ENCODE measurements at regions of chr3 and their contacts with region 1.

Region 1: DNA sequence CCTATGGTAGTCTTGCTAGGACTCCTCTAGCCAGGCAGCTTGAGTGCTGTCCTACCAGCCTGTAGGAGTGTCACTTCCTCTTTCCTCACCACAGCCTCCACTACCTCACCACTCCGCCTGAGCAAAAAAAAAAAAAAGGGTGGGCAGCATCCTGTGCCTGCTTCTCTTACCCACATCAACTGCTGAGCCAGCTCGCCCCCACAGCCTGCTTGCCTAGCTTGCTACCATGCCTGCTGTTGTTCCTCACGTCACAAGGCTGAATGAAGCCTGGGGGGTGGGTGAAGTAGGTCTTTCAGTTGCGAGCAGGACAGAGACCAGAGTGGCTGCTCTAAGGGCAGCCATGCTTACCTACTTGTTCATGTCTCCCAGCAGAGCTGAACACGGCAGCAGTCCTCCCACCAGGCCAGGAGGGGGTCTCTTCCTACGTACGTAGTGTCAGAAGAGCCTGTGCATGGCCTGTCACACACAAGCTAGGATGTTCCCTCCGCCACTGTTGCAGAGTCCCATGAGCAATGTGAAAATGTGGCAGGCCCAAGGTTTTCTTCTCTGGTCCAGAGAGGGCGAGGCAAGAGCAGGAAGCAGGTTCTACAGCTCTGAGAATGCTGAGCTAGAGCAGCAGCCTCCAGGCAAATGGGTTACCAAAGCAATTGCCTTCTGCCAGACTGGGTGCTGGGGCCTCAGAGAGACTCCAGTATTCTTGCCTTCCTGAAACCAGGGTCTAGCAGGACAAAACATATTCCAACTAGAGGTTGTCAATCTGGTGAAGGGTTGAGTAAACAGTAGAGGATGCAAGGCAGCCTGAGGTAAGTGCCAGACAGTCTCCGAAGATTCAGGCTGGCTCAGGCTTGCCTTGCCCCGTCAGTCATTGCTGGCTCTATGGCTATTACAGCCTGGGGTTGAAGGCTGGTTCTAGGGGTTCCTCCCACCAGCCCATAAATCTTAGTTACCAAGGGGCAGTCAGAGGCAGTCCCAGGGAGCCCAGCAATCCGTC is 8.1 kb downstream of the PPM1M start:
- DNase-seq: peak; percentile 61 to 93
- ATAC-seq: peak; percentile 85 to 94 (median 89)
- H3K4me3 ChIP-seq: peak overlapping the region; percentile 10
- H3K4me3 Mint-ChIP-seq: peak overlapping the region; percentile 93
- H3K27ac ChIP-seq: peak overlapping the region; percentile 92
- H3K27ac Mint-ChIP-seq: peak overlapping the region; percentile 94 to 95
- H3K4me1 ChIP-seq: peaks cover 59% of the 10 kb centered on the region
- H3K4me1 Mint-ChIP-seq: peaks cover 64 to 72% of the 10 kb centered on the region in 2 donors
- H3K27me3 ChIP-seq: no peaks in the 10 kb centered on the region
- H3K27me3 Mint-ChIP-seq: no peaks in the 10 kb centered on the region
- CTCF ChIP-seq: no peak

Region 2: DNA sequence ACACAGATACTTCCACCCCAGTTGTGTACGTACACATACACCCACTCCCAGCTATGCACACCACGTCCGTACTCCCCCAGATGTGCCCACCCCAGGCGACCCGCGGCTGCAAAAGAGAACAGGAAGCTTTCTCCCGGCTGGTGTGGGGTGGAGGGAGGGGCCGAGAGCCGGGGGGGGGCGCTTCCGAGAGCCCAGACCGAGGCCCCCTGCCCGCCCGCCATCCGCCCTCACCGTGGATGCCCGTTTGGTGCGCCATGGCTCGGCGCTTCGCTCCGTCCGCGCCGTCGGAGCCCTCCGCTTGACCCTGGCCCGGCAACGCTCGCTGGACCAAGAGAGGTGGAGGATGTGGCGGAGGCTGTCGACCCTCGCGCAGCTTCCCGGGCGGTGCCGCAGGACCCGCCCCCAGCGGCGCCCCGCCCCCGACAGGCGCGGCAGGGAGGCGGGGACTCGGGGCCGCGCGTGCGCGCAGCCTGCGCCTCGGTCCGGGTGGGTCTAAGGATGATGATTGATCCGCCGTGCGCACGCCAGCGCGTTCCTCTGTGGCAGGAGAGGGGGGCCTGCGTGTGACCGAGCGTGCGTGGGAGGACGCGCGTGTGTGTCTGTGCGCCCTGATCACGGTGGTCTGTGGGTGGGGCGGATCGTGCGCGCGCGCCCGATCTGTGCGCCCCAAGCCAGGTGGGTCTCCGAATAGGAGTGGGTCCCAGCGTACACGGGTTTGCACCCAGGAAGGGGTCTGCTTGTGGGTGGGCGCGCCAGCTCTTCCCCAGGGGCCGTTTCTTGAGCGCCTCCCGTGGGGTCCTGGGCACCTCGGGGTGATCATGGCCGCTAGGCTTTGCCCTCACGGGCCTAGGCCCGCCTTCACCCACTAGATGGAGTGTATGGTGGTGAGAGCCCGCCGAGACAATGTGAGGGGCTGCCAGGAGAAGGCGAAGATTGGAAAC is 14.6 kb before region 1 on chr3 and contains the start of gene TWF2:
- intact Hi-C with region 1: loop called (anchors 2 kb)
- DNase-seq: peak; percentile 84 to 94
- ATAC-seq: peak; percentile 89 to 95 (median 92)
- H3K4me3 ChIP-seq: peak within 1 kb of the TSS; percentile 98
- H3K4me3 Mint-ChIP-seq: peak within 1 kb of the TSS; percentile 95
- H3K27ac ChIP-seq: peak within 1 kb of the TSS; percentile 78
- H3K27ac Mint-ChIP-seq: peak within 1 kb of the TSS; percentile 87 to 91
- H3K4me1 ChIP-seq: peaks cover 68% of the 10 kb centered on the region
- H3K4me1 Mint-ChIP-seq: peaks cover 31 to 61% of the 10 kb centered on the region in 2 donors
- H3K27me3 ChIP-seq: no peaks in the 10 kb centered on the region
- H3K27me3 Mint-ChIP-seq: no peaks in the 10 kb centered on the region
- CTCF ChIP-seq: peak; percentile 54
- total RNA-seq, gene TWF2: 49.2 to 76.6 (median 52.0) TPM

Region 3: GRCh38 chr3:52270252-52270754 is 16.7 kb after region 1 on chr3:
- intact Hi-C with region 1: loop called (anchors 2 kb)
- DNase-seq: no peak
- ATAC-seq: peak in 1 of 3 donors; percentile 30
- H3K4me3 ChIP-seq: no peak overlapping the region
- H3K4me3 Mint-ChIP-seq: peak overlapping the region; percentile 67
- H3K27ac ChIP-seq: peak overlapping the region; percentile 70
- H3K27ac Mint-ChIP-seq: peak overlapping the region; percentile 88 to 90
- H3K4me1 ChIP-seq: peaks cover 48% of the 10 kb centered on the region
- H3K4me1 Mint-ChIP-seq: peaks cover 63% of the 10 kb centered on the region in 2 donors
- H3K27me3 ChIP-seq: no peaks in the 10 kb centered on the region
- H3K27me3 Mint-ChIP-seq: no peaks in the 10 kb centered on the region
- CTCF ChIP-seq: no peak

Measured in natural killer cell (primary cell).